T-cell (primary cell): ENCODE measurements at regions of chr1 and their contacts with region 1.

Region 1: GRCh38 chr1:236808564-236809130 is 13.6 kb downstream of the MTR start:
- DNase-seq: no peak
- ATAC-seq: no peak
- H3K4me3 ChIP-seq: no peak overlapping the region
- H3K4me3 Mint-ChIP-seq: no peak overlapping the region
- H3K27ac ChIP-seq: no peak overlapping the region
- H3K27ac Mint-ChIP-seq: no peak overlapping the region
- H3K4me1 ChIP-seq: no peaks in the 10 kb centered on the region
- H3K4me1 Mint-ChIP-seq: peaks cover 9 to 23% (median 12%) of the 10 kb centered on the region in 3 donors
- H3K27me3 ChIP-seq: no peaks in the 10 kb centered on the region
- H3K27me3 Mint-ChIP-seq: no peaks in the 10 kb centered on the region

Region 2: DNA sequence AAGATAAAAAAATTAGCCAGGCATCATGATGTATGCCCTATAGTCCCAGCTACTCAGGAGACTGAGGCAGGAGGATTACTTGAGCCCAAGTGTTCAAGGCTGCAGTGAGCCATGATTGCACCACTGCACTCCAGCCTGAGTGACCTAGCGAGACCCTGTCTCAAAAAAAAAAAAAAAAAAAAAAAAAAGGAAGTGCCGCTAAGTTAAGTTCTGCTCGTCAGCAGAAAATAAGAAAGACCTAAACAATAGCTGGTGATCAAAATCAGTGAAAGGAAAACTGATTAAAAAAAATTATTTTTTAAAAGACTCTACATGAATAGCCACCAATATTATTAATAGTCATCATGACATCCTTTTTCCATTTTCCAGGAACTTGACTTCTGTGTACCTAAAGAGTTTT is 57.7 kb before region 1 on chr1:
- CTCF ChIA-PET with region 1: interaction called, 4 to 10 read pairs
- POLR2A ChIA-PET with region 1: no interaction called
- DNase-seq: no peak
- ATAC-seq: no peak
- H3K4me3 ChIP-seq: no peak overlapping the region
- H3K4me3 Mint-ChIP-seq: no peak overlapping the region
- H3K27ac ChIP-seq: no peak overlapping the region
- H3K27ac Mint-ChIP-seq: no peak overlapping the region
- H3K4me1 ChIP-seq: no peaks in the 10 kb centered on the region
- H3K4me1 Mint-ChIP-seq: no peaks in the 10 kb centered on the region
- H3K27me3 ChIP-seq: peaks cover 0 to 15% of the 10 kb centered on the region in 2 experiments
- H3K27me3 Mint-ChIP-seq: peaks cover 18 to 19% of the 10 kb centered on the region in 2 donors

Region 3: DNA sequence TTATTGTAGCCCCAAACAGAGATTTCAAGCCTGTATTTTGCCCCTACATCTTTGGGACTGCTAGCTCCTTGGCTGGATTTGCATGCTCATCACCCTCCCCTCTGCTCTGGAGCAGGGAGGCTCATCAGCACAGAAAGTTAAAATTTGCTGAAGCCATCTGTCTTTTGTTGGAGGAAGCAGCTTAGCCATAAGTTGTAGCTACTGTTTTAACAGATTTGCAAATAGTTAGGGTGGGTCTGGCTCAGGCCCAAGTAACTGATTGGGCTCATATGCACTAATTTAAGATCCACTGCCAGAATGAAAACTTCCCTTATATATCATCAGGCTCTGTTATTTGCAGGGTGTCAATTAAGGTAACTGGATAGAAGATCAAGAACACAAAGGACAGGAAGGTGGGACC is 775.1 kb after region 1 on chr1:
- CTCF ChIA-PET with region 1: interaction called in 1 of 2 experiments, 13 read pairs
- POLR2A ChIA-PET with region 1: no interaction called
- DNase-seq: no peak
- ATAC-seq: no peak
- H3K4me3 ChIP-seq: no peak overlapping the region
- H3K4me3 Mint-ChIP-seq: no peak overlapping the region
- H3K27ac ChIP-seq: no peak overlapping the region
- H3K27ac Mint-ChIP-seq: no peak overlapping the region
- H3K4me1 ChIP-seq: no peaks in the 10 kb centered on the region
- H3K4me1 Mint-ChIP-seq: no peaks in the 10 kb centered on the region
- H3K27me3 ChIP-seq: no peaks in the 10 kb centered on the region
- H3K27me3 Mint-ChIP-seq: peaks cover under 1 to 4% of the 10 kb centered on the region in 2 donors